Heart right ventricle (tissue), 16 donors: ENCODE measurements at regions of chr10 and their contacts with region 1.

Region 1: DNA sequence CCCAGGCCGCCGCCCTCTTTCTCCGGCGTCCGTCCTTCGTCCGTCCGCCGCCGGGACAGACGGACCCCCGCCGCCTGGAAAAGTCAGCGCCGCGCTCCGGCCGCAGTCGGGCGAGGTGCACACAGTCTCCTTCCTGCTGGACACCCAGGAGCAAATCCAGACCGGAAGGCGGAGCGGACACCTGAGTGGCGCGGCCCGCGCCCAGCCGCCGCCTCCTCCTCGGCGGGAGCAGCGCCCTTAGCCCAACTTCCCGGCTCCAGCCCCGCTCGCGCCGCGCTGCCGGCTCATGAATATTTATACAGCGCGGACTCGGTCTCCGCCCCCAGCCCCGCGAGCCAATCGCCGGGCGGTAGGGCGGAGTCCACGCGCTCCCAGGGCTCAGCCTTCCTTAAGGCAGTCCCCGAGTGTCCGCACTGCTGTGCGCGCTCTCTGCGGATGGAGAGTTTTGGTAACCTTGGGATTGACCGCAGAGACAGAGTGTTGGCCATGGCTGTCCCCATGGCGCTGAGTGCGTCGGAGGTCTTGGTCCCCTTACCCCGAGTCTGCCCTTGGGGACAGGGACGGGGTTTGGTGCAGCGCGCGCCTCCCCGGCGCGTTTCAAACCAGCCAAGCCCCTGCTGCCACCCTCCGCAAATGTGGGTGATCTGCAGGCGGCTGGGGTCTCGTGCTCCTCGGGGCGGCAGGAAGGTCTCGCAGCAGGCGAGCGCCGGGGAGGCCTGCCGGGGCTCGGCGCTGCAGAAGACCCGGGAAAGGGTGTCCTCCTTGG is at the start of gene FZD8:
- DNase-seq: peak; percentile 92 to 93
- ATAC-seq: peak; percentile 93 to 97 (median 96)
- H3K4me3 ChIP-seq: peak within 1 kb of the TSS; percentile 75 to 94 (median 84)
- H3K27ac ChIP-seq: peak within 1 kb of the TSS; percentile 84 to 99 (median 90)
- H3K4me1 ChIP-seq: peaks cover 8 to 55% (median 36%) of the 10 kb centered on the region in 9 donors
- H3K27me3 ChIP-seq: peaks cover 0 to 74% (median 0%) of the 10 kb centered on the region in 7 donors
- CTCF ChIP-seq: peak in 4 of 9 donors; percentile 6 to 29 (median 18)
- total RNA-seq, gene FZD8: 3.0 to 19.5 (median 6.4) TPM

Region 2: GRCh38 chr10:35421553-35422178 is 220.5 kb before region 1 on chr10:
- intact Hi-C with region 1: no loop called
- DNase-seq: no peak
- ATAC-seq: peak; percentile 52 to 81 (median 78)
- H3K4me3 ChIP-seq: no peak overlapping the region
- H3K27ac ChIP-seq: peak overlapping the region in 9 of 10 donors; percentile 44 to 79 (median 55)
- H3K4me1 ChIP-seq: peaks cover 33 to 99% (median 83%) of the 10 kb centered on the region in 9 donors
- H3K27me3 ChIP-seq: no peaks in the 10 kb centered on the region
- CTCF ChIP-seq: no peak

Region 3: DNA sequence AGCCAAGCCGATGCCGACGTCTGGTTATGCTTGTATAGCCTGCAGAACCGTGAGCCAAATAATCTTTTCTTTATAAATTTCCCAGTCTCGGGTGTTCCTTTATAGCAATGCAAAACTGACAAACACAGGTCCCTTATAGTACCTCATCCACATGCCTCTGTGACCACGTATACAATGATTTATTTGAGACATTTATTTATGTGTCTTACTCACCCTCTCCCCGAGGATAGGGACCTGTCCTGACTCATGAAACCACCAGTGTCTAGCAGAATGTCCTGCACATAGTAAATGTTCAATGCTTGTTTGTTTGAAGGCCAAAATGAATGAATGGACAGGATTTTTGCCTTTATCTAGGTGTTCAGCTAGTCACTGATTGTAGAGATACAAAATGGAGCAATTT is 147.8 kb after region 1 on chr10:
- intact Hi-C with region 1: loop called in 1 of 10 experiments (anchors 5 kb)
- DNase-seq: no peak
- ATAC-seq: no peak
- H3K4me3 ChIP-seq: no peak overlapping the region
- H3K27ac ChIP-seq: no peak overlapping the region
- H3K4me1 ChIP-seq: peaks cover 0 to 3% (median 0%) of the 10 kb centered on the region in 9 donors
- H3K27me3 ChIP-seq: no peaks in the 10 kb centered on the region
- CTCF ChIP-seq: no peak

Region 4: DNA sequence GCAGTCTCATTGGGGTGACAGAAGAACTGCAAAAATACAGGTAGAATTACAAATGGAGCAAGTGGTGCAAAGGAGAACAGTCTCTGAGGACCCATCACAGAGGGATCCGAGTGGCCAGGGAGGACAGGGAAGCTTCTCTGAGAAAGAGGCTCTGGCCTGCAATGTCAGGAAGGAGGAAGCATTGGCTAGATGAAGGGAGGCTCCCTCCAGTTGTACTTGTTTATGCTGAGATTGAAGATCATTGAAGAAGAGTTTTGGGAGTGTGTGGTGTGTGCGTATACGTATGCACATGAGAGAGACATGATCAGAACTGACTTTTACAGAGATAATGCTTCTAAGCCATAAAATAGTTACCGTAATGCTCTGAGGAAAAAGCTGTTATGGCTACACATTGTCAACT is 274.6 kb after region 1 on chr10:
- intact Hi-C with region 1: loop called in 9 of 10 experiments (anchors 2 to 10 kb)
- DNase-seq: no peak
- ATAC-seq: peak in 3 of 8 donors; percentile 47 to 58 (median 47)
- H3K4me3 ChIP-seq: no peak overlapping the region
- H3K27ac ChIP-seq: no peak overlapping the region
- H3K4me1 ChIP-seq: peaks cover 0 to 14% (median 9%) of the 10 kb centered on the region in 9 donors
- H3K27me3 ChIP-seq: no peaks in the 10 kb centered on the region
- CTCF ChIP-seq: peak in 5 of 9 donors; percentile 12 to 48 (median 37)

Region 5: GRCh38 chr10:35993591-35994515 is 351.6 kb after region 1 on chr10:
- intact Hi-C with region 1: loop called in 5 of 10 experiments (anchors 5 to 10 kb)
- DNase-seq: no peak
- ATAC-seq: peak in 2 of 8 donors; percentile 52 to 72
- H3K4me3 ChIP-seq: no peak overlapping the region
- H3K27ac ChIP-seq: no peak overlapping the region
- H3K4me1 ChIP-seq: peaks cover 0 to 30% (median 9%) of the 10 kb centered on the region in 9 donors
- H3K27me3 ChIP-seq: no peaks in the 10 kb centered on the region
- CTCF ChIP-seq: no peak

Region 6: GRCh38 chr10:36254199-36254598 is 612.0 kb after region 1 on chr10:
- intact Hi-C with region 1: loop called in 2 of 10 experiments (anchors 5 to 10 kb)
- DNase-seq: peak; percentile 67 to 77
- ATAC-seq: peak in 7 of 8 donors; percentile 47 to 88 (median 80)
- H3K4me3 ChIP-seq: no peak overlapping the region
- H3K27ac ChIP-seq: no peak overlapping the region
- H3K4me1 ChIP-seq: peaks cover 0 to 27% (median 12%) of the 10 kb centered on the region in 9 donors
- H3K27me3 ChIP-seq: no peaks in the 10 kb centered on the region
- CTCF ChIP-seq: no peak

Region 7: DNA sequence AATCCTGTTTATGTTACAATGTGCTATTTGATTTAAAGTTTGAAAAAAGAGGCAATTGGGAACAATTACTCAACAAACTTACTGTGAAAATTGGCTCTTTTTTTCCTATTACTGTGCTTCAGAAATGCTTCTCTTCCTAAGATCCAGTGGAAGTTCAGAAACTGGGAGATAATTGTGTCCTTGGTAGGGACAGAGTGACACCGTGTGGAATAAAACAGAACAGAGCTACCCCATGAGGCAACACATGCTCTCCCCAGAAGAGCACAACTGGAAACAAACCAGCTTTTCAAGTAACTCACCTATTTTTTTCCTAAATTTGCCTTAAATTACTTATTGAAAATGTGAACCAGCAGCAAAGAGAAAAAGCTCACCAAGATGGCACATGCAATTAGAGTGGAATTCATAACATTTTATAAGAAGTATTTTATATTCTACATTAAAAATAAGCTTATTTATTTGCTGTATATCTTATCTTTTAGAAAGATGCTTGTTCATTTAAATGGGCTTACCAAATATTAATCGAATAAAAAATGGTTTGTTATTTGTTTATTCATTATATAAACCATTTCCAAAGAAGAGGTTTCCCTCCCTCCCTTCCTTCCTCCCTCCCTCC is 1137.1 kb after region 1 on chr10:
- intact Hi-C with region 1: loop called in 4 of 10 experiments (anchors 2 to 5 kb)
- DNase-seq: peak in 1 of 2 donors; percentile 41
- ATAC-seq: peak; percentile 83 to 92 (median 90)
- H3K4me3 ChIP-seq: no peak overlapping the region
- H3K27ac ChIP-seq: no peak overlapping the region
- H3K4me1 ChIP-seq: peaks cover 0 to 6% (median 0%) of the 10 kb centered on the region in 9 donors
- H3K27me3 ChIP-seq: no peaks in the 10 kb centered on the region
- CTCF ChIP-seq: peak; percentile 55 to 88 (median 82)